CD4-positive, alpha-beta T cell (primary cell): ENCODE measurements at regions of chr18 and their contacts with region 1.

Region 1: GRCh38 chr18:79877214-79878091 is 74.0 kb downstream of the SLC66A2 start:
- DNase-seq: no peak
- ATAC-seq: no peak
- H3K4me3 ChIP-seq: no peak overlapping the region
- H3K4me3 Mint-ChIP-seq: no peak overlapping the region
- H3K27ac ChIP-seq: no peak overlapping the region
- H3K27ac Mint-ChIP-seq: no peak overlapping the region
- H3K4me1 ChIP-seq: no peaks in the 10 kb centered on the region
- H3K4me1 Mint-ChIP-seq: no peaks in the 10 kb centered on the region
- H3K27me3 ChIP-seq: no peaks in the 10 kb centered on the region
- H3K27me3 Mint-ChIP-seq: no peaks in the 10 kb centered on the region
- CTCF ChIP-seq: no peak

Region 2: GRCh38 chr18:79819968-79820351 is 57.5 kb before region 1 on chr18:
- CTCF ChIA-PET with region 1: no interaction called
- POLR2A ChIA-PET with region 1: no interaction called
- intact Hi-C with region 1: no loop called
- DNase-seq: peak in 3 of 14 experiments; percentile 28 to 57 (median 53)
- ATAC-seq: no peak
- H3K4me3 ChIP-seq: no peak overlapping the region
- H3K4me3 Mint-ChIP-seq: no peak overlapping the region
- H3K27ac ChIP-seq: no peak overlapping the region
- H3K27ac Mint-ChIP-seq: no peak overlapping the region
- H3K4me1 ChIP-seq: peaks cover 9% of the 10 kb centered on the region
- H3K4me1 Mint-ChIP-seq: peaks cover 7% of the 10 kb centered on the region
- H3K27me3 ChIP-seq: no peaks in the 10 kb centered on the region
- H3K27me3 Mint-ChIP-seq: peaks cover 7% of the 10 kb centered on the region
- CTCF ChIP-seq: no peak

Region 3: GRCh38 chr18:79905993-79906392 is 28.5 kb after region 1 on chr18:
- CTCF ChIA-PET with region 1: no interaction called
- POLR2A ChIA-PET with region 1: no interaction called
- intact Hi-C with region 1: loop called in 1 of 2 experiments (anchors 1 kb)
- DNase-seq: no peak
- ATAC-seq: no peak
- H3K4me3 ChIP-seq: no peak overlapping the region
- H3K4me3 Mint-ChIP-seq: no peak overlapping the region
- H3K27ac ChIP-seq: no peak overlapping the region
- H3K27ac Mint-ChIP-seq: no peak overlapping the region
- H3K4me1 ChIP-seq: no peaks in the 10 kb centered on the region
- H3K4me1 Mint-ChIP-seq: no peaks in the 10 kb centered on the region
- H3K27me3 ChIP-seq: no peaks in the 10 kb centered on the region
- H3K27me3 Mint-ChIP-seq: no peaks in the 10 kb centered on the region
- CTCF ChIP-seq: no peak